ENCODE measurements at regions of chr11 and their contacts with region 1.

Region 1: GRCh38 chr11:114075891-114076441 is 16.5 kb downstream of the ZBTB16 start:
- DNase-seq: peak; percentile 60
- H3K4me3 Mint-ChIP-seq: peak overlapping the region; percentile 20
- H3K27ac Mint-ChIP-seq: peak overlapping the region; percentile 73
- H3K4me1 Mint-ChIP-seq: peaks cover 76% of the 10 kb centered on the region
- H3K27me3 Mint-ChIP-seq: no peaks in the 10 kb centered on the region

Region 2: DNA sequence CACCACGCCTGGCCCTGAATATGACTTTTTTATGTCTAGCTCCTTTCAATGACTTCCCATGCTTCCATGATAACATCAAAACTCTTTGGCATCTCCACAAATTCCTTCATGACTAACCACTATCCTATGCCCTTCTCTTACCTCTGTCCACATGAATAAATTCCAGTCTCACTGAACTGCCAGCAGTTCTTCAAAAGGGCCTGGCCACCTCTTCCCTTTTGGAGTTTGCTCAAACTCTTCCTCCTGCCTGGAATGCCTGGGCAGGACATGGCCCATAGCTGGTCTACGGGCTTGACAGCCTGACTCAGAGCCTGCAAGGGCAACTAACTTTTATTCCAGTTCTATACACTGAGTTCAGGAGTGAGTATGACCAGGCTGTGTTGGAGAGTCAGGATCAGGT is 58.2 kb before region 1 on chr11:
- CTCF ChIA-PET with region 1: no interaction called
- POLR2A ChIA-PET with region 1: no interaction called
- intact Hi-C with region 1: no loop called
- DNase-seq: no peak
- H3K4me3 Mint-ChIP-seq: no peak overlapping the region
- H3K27ac Mint-ChIP-seq: no peak overlapping the region
- H3K4me1 Mint-ChIP-seq: no peaks in the 10 kb centered on the region
- H3K27me3 Mint-ChIP-seq: no peaks in the 10 kb centered on the region

Region 3: DNA sequence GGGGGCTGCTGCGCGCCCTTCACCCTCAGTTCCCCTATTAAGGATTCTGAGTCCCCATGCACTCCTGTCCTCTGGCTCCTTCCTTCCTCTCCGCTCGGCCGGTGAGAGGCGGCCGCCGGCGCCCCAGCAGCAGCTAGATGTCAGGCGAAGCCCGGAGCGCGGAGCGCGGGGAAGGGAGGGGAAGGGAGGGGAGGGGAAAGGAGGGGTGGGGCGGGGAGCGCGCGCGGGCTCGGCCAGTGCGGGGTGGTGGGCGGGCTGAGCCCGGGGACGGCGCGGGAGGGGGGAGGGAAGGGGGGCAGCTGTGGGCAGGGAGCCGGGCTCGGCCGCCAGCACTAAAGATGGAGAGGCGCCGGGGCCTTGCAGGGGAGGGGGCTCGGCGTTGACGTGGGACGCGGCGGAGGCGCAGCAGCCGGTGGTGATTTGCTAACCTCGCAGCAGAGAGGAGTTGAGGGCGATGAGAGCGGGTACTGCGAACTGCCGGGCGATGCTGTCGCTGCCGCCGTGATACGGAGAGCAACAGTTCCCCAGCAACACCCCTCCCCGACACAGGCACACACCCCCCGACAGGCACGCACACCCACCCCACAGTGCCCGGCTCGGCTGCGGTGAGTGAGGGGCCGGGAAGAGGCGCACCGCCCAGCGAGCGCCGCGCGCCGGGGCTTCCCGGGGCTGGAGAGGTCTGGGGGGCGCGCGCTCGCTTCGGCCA is 16.5 kb before region 1 on chr11 and contains the start of gene ZBTB16:
- CTCF ChIA-PET with region 1: interaction called, 3 read pairs
- POLR2A ChIA-PET with region 1: interaction called, 9 read pairs
- intact Hi-C with region 1: loop called (anchors 1 kb)
- DNase-seq: peak; percentile 75
- H3K4me3 Mint-ChIP-seq: peak within 1 kb of the TSS; percentile 80
- H3K27ac Mint-ChIP-seq: peak within 1 kb of the TSS; percentile 67
- H3K4me1 Mint-ChIP-seq: peaks cover 6% of the 10 kb centered on the region
- H3K27me3 Mint-ChIP-seq: peaks cover 16% of the 10 kb centered on the region
- total RNA-seq, gene ZBTB16: 7.7 to 9.7 TPM

Region 4: DNA sequence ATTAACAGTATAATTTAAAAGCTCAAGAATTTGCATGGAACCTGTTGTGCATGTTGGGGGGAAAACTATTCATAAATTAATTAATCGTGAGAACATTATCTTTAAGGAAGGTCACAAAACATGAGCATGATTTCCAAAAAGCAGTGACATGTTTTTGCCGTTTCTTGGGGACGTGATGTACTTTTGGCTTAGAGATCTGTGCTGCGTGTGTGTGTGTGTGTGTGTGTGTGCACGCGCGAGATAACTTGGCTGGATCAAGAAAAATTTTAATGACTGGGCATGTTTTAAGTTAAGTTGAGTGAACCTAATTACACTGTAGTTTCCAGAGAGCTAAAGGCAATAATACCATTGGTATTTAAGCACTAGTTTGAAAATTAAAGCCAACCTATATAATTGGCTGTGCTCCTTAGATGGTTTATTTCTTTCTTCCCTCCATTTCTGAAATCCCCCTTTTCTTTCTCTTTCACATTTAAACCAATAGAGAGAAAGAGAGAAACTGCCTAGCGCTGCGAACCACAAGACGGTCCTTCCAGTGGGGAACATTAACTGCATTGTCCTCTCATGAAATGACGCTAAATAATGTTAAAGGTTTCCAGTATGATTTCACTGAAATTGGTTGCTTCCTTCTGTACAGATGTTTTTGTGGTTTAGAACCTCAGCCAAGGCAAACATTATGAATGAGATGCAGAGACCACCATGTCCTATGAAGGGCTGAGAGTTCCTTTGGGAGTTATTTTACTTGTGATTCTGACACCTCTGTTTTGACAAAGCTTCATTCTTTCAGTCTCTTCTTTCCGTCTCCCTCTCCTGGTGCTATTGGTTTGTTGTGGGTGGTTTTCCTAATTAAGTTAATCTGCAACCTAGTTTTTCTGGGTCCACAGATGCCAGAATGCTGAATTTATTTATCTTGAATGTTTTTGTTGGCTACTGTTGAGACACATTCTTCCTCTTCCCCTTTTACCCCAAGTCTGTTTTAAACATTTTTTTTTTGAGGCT is 35.3 kb after region 1 on chr11:
- CTCF ChIA-PET with region 1: no interaction called
- POLR2A ChIA-PET with region 1: no interaction called
- intact Hi-C with region 1: no loop called
- DNase-seq: no peak
- H3K4me3 Mint-ChIP-seq: no peak overlapping the region
- H3K27ac Mint-ChIP-seq: no peak overlapping the region
- H3K4me1 Mint-ChIP-seq: peaks cover 10% of the 10 kb centered on the region
- H3K27me3 Mint-ChIP-seq: peaks cover 3% of the 10 kb centered on the region

Measured in activated CD4-positive, alpha-beta memory T cell treated with anti-CD3 and anti-CD28 coated beads for 36 hours (primary cell).